CD4-positive, alpha-beta T cell (primary cell): ENCODE measurements at regions of chr1 and their contacts with region 1.

Region 1: GRCh38 chr1:67307251-67308060 is at the start of gene IL12RB2:
- DNase-seq: peak in 9 of 14 experiments; percentile 4 to 69 (median 34)
- ATAC-seq: peak; percentile 68
- H3K4me3 ChIP-seq: peak within 1 kb of the TSS; percentile 55
- H3K4me3 Mint-ChIP-seq: peak within 1 kb of the TSS; percentile 85
- H3K27ac ChIP-seq: no peak within 1 kb of the TSS
- H3K27ac Mint-ChIP-seq: peak within 1 kb of the TSS; percentile 34
- H3K4me1 ChIP-seq: peaks cover 14% of the 10 kb centered on the region
- H3K4me1 Mint-ChIP-seq: peaks cover 15% of the 10 kb centered on the region
- H3K27me3 ChIP-seq: peaks cover 3 to 5% of the 10 kb centered on the region in 2 experiments
- H3K27me3 Mint-ChIP-seq: peaks cover 37% of the 10 kb centered on the region
- CTCF ChIP-seq: no peak
- total RNA-seq, gene IL12RB2: 0.98 to 1.2 TPM

Region 2: DNA sequence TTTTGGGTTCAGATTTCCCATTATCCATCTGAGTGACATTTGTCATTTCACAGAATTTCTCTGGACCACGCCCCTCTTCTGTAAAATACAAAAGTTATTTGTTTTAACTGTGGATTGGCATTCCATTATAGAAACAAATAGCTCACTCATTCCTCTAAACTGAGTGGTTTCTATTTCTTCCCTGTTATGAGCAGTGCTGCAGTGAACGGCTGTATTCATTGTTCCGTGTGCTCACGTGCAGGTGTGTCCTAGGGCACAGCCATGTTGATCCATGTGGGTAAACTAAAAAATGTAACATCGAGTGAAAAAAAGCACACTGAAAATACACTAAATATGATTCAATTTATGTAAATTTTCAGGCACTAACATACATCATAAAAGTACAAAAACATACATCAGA is 26.8 kb before region 1 on chr1:
- CTCF ChIA-PET with region 1: no interaction called
- POLR2A ChIA-PET with region 1: no interaction called
- intact Hi-C with region 1: loop called in 1 of 2 experiments (anchors 1 kb)
- DNase-seq: no peak
- ATAC-seq: no peak
- H3K4me3 ChIP-seq: no peak overlapping the region
- H3K4me3 Mint-ChIP-seq: no peak overlapping the region
- H3K27ac ChIP-seq: no peak overlapping the region
- H3K27ac Mint-ChIP-seq: no peak overlapping the region
- H3K4me1 ChIP-seq: no peaks in the 10 kb centered on the region
- H3K4me1 Mint-ChIP-seq: no peaks in the 10 kb centered on the region
- H3K27me3 ChIP-seq: no peaks in the 10 kb centered on the region
- H3K27me3 Mint-ChIP-seq: no peaks in the 10 kb centered on the region
- CTCF ChIP-seq: no peak